MCF 10A (cell line): ENCODE measurements at regions of chr12 and their contacts with region 1.

Region 1: DNA sequence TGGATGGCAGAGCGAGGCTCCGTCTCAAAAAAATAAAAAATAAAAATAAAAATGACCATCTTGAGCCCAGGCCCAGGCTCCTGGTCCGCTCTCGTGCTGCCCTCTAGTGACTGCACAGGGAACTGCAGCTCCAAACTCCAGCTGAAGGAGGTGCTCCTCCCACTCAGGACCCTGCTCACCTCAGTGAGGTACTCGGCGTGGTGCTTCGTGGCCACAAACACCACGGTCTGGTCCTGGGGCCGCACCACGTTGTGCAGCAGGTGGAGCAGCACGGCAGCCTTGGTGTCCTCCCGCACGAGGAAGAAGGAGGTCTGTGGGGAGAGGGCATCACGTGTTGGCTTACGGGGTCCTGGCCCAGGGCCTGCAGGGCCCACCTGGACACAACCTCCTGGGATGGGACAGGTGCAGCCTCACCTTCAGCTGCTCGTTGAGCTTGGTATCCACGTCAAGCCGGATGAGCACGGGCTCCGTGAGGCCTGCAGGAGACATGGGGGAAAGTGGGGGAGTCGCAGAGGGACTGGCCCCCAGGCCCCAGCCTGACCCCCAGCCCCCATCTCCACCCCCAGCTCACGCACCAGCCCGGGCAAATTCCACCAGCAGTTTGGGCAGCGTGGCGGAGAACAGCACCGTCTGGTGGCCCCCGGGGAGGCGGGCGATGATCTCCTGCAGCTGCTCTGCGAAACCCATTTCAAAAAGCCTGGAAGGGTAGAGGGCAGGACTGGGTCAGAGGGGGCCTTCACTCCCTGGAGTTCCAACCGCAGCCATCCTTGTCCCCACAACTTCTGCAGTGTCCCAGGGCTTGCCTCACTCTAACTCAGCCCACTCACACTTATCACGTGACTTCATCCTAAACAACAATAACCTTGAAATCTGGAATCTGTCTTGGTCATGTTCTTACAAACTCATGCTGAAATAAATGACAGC is 10.6 kb downstream of the DDX54 start:
- DNase-seq: peak; percentile 67
- H3K4me3 Mint-ChIP-seq: no peak overlapping the region
- H3K27ac Mint-ChIP-seq: peak overlapping the region; percentile 14
- H3K4me1 Mint-ChIP-seq: peaks cover 5% of the 10 kb centered on the region
- H3K27me3 Mint-ChIP-seq: no peaks in the 10 kb centered on the region
- CTCF ChIP-seq: peak; percentile 96

Region 2: GRCh38 chr12:113120670-113121370 is 53.9 kb before region 1 on chr12:
- CTCF ChIA-PET with region 1: no interaction called
- POLR2A ChIA-PET with region 1: no interaction called
- intact Hi-C with region 1: no loop called
- DNase-seq: no peak
- H3K4me3 Mint-ChIP-seq: no peak overlapping the region
- H3K27ac Mint-ChIP-seq: no peak overlapping the region
- H3K4me1 Mint-ChIP-seq: peaks cover 6% of the 10 kb centered on the region
- H3K27me3 Mint-ChIP-seq: peaks cover 22% of the 10 kb centered on the region
- CTCF ChIP-seq: no peak

Region 3: GRCh38 chr12:113161414-113162016 is 13.2 kb before region 1 on chr12:
- CTCF ChIA-PET with region 1: interaction called, 33 read pairs
- POLR2A ChIA-PET with region 1: interaction called, 3 read pairs
- intact Hi-C with region 1: no loop called
- DNase-seq: peak; percentile 21
- H3K4me3 Mint-ChIP-seq: no peak overlapping the region
- H3K27ac Mint-ChIP-seq: no peak overlapping the region
- H3K4me1 Mint-ChIP-seq: peaks cover 11% of the 10 kb centered on the region
- H3K27me3 Mint-ChIP-seq: no peaks in the 10 kb centered on the region
- CTCF ChIP-seq: no peak

Region 4: GRCh38 chr12:113184900-113185773 is 10.4 kb after region 1 on chr12 and contains the starts of genes DDX54 and RITA1:
- CTCF ChIA-PET with region 1: interaction called, 13 read pairs
- POLR2A ChIA-PET with region 1: interaction called, 25 read pairs
- intact Hi-C with region 1: no loop called
- DNase-seq: peak; percentile 91
- H3K4me3 Mint-ChIP-seq: peak within 1 kb of the TSS; percentile 91
- H3K27ac Mint-ChIP-seq: peak within 1 kb of the TSS; percentile 94
- H3K4me1 Mint-ChIP-seq: peaks cover 15% of the 10 kb centered on the region
- H3K27me3 Mint-ChIP-seq: no peaks in the 10 kb centered on the region
- CTCF ChIP-seq: no peak
- total RNA-seq, gene DDX54: 67.3 and 75.8 TPM in 2 replicates
- total RNA-seq, gene RITA1: 17.5 and 17.9 TPM in 2 replicates

Region 5: GRCh38 chr12:113778432-113779132 is 603.9 kb after region 1 on chr12:
- CTCF ChIA-PET with region 1: no interaction called
- POLR2A ChIA-PET with region 1: no interaction called
- intact Hi-C with region 1: no loop called
- DNase-seq: no peak
- H3K4me3 Mint-ChIP-seq: no peak overlapping the region
- H3K27ac Mint-ChIP-seq: no peak overlapping the region
- H3K4me1 Mint-ChIP-seq: no peaks in the 10 kb centered on the region
- H3K27me3 Mint-ChIP-seq: peaks cover 30% of the 10 kb centered on the region
- CTCF ChIP-seq: no peak